ENCODE measurements at regions of chr2 and their contacts with region 1.

Region 1: GRCh38 chr2:42169100-42169873 is at the start of gene EML4:
- DNase-seq: peak; percentile 82 to 98 (median 89)
- ATAC-seq: peak; percentile 97
- H3K4me3 ChIP-seq: peak within 1 kb of the TSS; percentile 88
- H3K4me3 Mint-ChIP-seq: peak within 1 kb of the TSS in 2 of 10 donors; percentile 26 to 49
- H3K27ac ChIP-seq: peak within 1 kb of the TSS; percentile 96
- H3K27ac Mint-ChIP-seq: peak within 1 kb of the TSS in 4 of 9 donors; percentile 75 to 94 (median 84)
- H3K4me1 ChIP-seq: peaks cover 15 to 21% of the 10 kb centered on the region in 2 donors
- H3K4me1 Mint-ChIP-seq: peaks cover 9 to 27% (median 12%) of the 10 kb centered on the region in 7 donors
- H3K27me3 ChIP-seq: no peaks in the 10 kb centered on the region
- H3K27me3 Mint-ChIP-seq: peaks cover 0 to 9% (median 0%) of the 10 kb centered on the region in 5 donors
- total RNA-seq, gene EML4: 91.1 to 167 (median 143) TPM

Region 2: DNA sequence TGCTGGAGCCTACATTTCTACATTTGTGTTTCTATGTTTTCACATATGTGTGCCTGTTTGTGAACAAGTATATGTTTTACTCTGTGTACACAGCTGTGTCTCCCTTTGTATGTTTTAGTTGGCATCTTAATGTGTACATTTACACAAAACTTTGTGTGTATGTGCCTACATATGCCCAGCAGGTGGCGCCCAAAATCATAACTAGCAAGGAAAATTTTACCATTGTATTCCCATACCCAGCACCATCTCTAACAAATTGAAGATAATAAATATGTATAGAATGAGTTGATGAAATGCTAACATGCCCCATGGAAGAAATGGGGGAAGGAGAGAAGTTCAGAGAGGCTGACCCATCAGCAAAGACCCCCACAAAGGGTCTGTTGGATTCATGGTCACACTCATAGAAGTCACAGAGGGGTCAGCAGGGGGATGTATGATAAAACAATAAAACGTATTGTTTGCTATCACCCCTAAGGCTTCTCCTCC is 73.3 kb before region 1 on chr2:
- CTCF ChIA-PET with region 1: interaction called, 10 read pairs
- POLR2A ChIA-PET with region 1: interaction called, 187 read pairs
- intact Hi-C with region 1: loop called in 1 of 2 experiments (anchors 1 kb)
- DNase-seq: peak; percentile 46 to 78 (median 71)
- ATAC-seq: peak; percentile 71
- H3K4me3 ChIP-seq: no peak overlapping the region
- H3K4me3 Mint-ChIP-seq: no peak overlapping the region
- H3K27ac ChIP-seq: no peak overlapping the region
- H3K27ac Mint-ChIP-seq: peak overlapping the region in 7 of 9 donors; percentile 4 to 70 (median 25)
- H3K4me1 ChIP-seq: peaks cover 33 to 38% of the 10 kb centered on the region in 2 donors
- H3K4me1 Mint-ChIP-seq: peaks cover 37 to 50% (median 47%) of the 10 kb centered on the region in 7 donors
- H3K27me3 ChIP-seq: no peaks in the 10 kb centered on the region
- H3K27me3 Mint-ChIP-seq: peaks cover 0 to 35% (median 0%) of the 10 kb centered on the region in 5 donors

Region 3: GRCh38 chr2:42127425-42128424 is 41.6 kb before region 1 on chr2:
- CTCF ChIA-PET with region 1: interaction called, 7 read pairs
- POLR2A ChIA-PET with region 1: interaction called, 39 read pairs
- intact Hi-C with region 1: loop called in 1 of 2 experiments (anchors 1 kb)
- DNase-seq: peak in 7 of 9 donors; percentile 42 to 69 (median 60)
- ATAC-seq: peak; percentile 63
- H3K4me3 ChIP-seq: peak overlapping the region; percentile 33
- H3K4me3 Mint-ChIP-seq: peak overlapping the region; percentile 63 to 86 (median 78)
- H3K27ac ChIP-seq: peak overlapping the region; percentile 70
- H3K27ac Mint-ChIP-seq: peak overlapping the region; percentile 68 to 97 (median 94)
- H3K4me1 ChIP-seq: peaks cover 87 to 96% of the 10 kb centered on the region in 2 donors
- H3K4me1 Mint-ChIP-seq: peaks cover 72 to 98% (median 92%) of the 10 kb centered on the region in 7 donors
- H3K27me3 ChIP-seq: no peaks in the 10 kb centered on the region
- H3K27me3 Mint-ChIP-seq: no peaks in the 10 kb centered on the region

Region 4: DNA sequence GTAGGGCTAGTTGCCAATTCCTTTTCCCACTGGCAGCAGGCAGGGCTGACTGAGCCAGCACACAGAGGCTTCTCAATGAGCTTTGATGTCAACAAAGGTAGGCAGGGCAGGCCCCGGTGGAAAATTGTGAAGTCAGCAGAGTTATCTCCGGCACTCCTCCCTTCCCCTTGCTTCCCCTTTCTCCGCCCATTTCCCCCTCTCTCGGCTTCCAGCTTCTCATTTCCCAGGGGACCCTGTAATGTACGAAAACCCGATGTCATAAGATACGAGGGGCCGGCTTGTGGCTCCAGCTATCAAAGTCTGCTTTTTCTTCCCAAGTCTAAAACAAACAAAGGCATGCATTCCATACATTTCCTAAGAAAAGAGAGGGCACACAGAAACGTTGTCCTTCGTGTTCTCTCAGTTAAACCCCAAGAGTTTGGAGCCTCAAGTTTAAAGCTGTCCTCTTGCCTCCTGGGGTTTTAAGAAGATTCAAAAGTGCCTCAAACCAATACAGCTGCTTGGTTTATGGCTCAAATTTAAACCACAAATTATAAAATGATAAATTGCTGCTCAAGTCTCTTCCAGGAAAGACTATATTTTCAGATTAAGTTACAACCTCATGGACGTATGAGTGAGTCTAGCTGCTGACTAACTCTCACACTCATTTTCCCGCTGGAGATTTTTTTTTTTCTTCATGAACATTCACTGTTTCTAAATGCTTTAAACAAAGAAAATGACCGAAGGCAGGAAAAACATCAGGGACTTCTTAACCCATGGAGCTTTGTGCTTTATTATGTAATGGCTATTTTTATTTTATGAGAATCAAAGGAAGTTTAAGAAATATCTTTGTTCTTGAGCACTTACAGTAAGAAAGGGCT is 27.4 kb before region 1 on chr2:
- CTCF ChIA-PET with region 1: interaction called, 4 read pairs
- POLR2A ChIA-PET with region 1: interaction called, 22 read pairs
- intact Hi-C with region 1: no loop called
- DNase-seq: peak in 1 of 9 donors; percentile 35
- ATAC-seq: peak; percentile 68
- H3K4me3 ChIP-seq: no peak overlapping the region
- H3K4me3 Mint-ChIP-seq: peak overlapping the region; percentile 49 to 76 (median 69)
- H3K27ac ChIP-seq: peak overlapping the region; percentile 42
- H3K27ac Mint-ChIP-seq: peak overlapping the region; percentile 36 to 86 (median 67)
- H3K4me1 ChIP-seq: peaks cover 12 to 31% of the 10 kb centered on the region in 2 donors
- H3K4me1 Mint-ChIP-seq: peaks cover 22 to 70% (median 58%) of the 10 kb centered on the region in 7 donors
- H3K27me3 ChIP-seq: no peaks in the 10 kb centered on the region
- H3K27me3 Mint-ChIP-seq: no peaks in the 10 kb centered on the region

Region 5: GRCh38 chr2:42183775-42184174 is 14.5 kb after region 1 on chr2:
- CTCF ChIA-PET with region 1: interaction called, 4 read pairs
- POLR2A ChIA-PET with region 1: interaction called, 14 read pairs
- intact Hi-C with region 1: loop called in 1 of 2 experiments (anchors 1 kb)
- DNase-seq: no peak
- ATAC-seq: peak; percentile 57
- H3K4me3 ChIP-seq: no peak overlapping the region
- H3K4me3 Mint-ChIP-seq: peak overlapping the region in 1 of 10 donors; percentile 10
- H3K27ac ChIP-seq: no peak overlapping the region
- H3K27ac Mint-ChIP-seq: peak overlapping the region in 2 of 9 donors; percentile 21 to 64
- H3K4me1 ChIP-seq: peaks cover 54 to 56% of the 10 kb centered on the region in 2 donors
- H3K4me1 Mint-ChIP-seq: peaks cover 15 to 90% (median 64%) of the 10 kb centered on the region in 7 donors
- H3K27me3 ChIP-seq: no peaks in the 10 kb centered on the region
- H3K27me3 Mint-ChIP-seq: no peaks in the 10 kb centered on the region

Region 6: GRCh38 chr2:42652086-42652485 is 482.8 kb after region 1 on chr2:
- CTCF ChIA-PET with region 1: no interaction called
- POLR2A ChIA-PET with region 1: no interaction called
- intact Hi-C with region 1: loop called in 1 of 2 experiments (anchors 5 kb)
- DNase-seq: peak in 7 of 9 donors; percentile 71 to 85 (median 80)
- ATAC-seq: peak; percentile 83
- H3K4me3 ChIP-seq: peak overlapping the region; percentile 41
- H3K4me3 Mint-ChIP-seq: peak overlapping the region; percentile 70 to 86 (median 76)
- H3K27ac ChIP-seq: peak overlapping the region; percentile 71
- H3K27ac Mint-ChIP-seq: peak overlapping the region; percentile 78 to 99 (median 96)
- H3K4me1 ChIP-seq: peaks cover 0 to 69% of the 10 kb centered on the region in 2 donors
- H3K4me1 Mint-ChIP-seq: peaks cover 24 to 96% (median 68%) of the 10 kb centered on the region in 7 donors
- H3K27me3 ChIP-seq: no peaks in the 10 kb centered on the region
- H3K27me3 Mint-ChIP-seq: no peaks in the 10 kb centered on the region